CD8-positive, alpha-beta T cell (primary cell): ENCODE measurements at regions of chr3 and their contacts with region 1.

Region 1: DNA sequence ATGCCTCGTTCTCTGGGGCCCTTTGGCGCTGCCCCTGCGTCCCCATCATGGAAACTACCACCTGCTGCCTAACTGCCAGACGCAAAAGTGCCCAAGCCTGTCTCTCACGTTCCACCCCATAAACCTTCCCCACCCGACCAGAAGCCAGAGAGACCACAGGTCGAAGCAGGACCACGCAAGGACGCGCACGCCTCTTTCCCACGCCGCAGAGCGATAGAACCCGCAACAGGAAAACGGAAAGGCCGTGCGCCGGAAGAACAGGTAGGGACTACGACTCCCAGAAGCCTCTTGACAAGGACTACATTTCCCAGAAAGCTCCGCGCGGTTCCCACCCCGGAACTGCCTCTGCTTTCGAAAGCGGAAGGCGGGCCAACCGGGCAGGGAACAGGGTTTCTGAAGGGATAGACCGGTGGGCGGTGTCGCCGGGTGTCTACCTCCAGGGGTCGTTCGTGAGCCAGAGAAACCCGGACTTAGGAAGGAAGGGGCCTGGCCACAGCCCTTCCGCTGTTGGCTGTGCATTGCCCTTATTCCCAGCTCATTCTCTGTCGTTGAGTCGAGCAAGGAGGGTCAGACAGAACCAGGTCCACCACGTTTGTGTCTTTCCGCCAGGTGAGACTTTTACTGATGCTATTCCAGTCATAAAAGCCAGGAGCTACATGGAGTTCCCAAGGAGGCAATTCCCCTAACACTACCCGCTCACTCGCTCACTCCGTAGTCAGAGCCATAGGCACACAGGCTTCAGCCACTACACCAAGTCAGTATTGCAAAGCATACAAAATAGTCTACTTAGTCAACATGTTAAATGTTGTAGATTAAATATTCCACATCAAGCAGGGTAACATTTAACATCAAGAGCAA is 56.6 kb upstream of the ZBTB38 start:
- DNase-seq: peak; percentile 93 to 98 (median 98)
- ATAC-seq: peak; percentile 93
- H3K4me3 ChIP-seq: peak overlapping the region; percentile 82 to 87
- H3K4me3 Mint-ChIP-seq: peak overlapping the region; percentile 93
- H3K27ac ChIP-seq: peak overlapping the region; percentile 61 to 84
- H3K27ac Mint-ChIP-seq: peak overlapping the region; percentile 96
- H3K4me1 ChIP-seq: peaks cover 43% of the 10 kb centered on the region
- H3K4me1 Mint-ChIP-seq: peaks cover 53% of the 10 kb centered on the region
- H3K27me3 ChIP-seq: no peaks in the 10 kb centered on the region
- H3K27me3 Mint-ChIP-seq: no peaks in the 10 kb centered on the region
- CTCF ChIP-seq: peak; percentile 60

Region 2: GRCh38 chr3:141104151-141104821 is 207.4 kb before region 1 on chr3:
- CTCF ChIA-PET with region 1: no interaction called
- POLR2A ChIA-PET with region 1: no interaction called
- intact Hi-C with region 1: no loop called
- DNase-seq: no peak
- ATAC-seq: no peak
- H3K4me3 ChIP-seq: no peak overlapping the region
- H3K4me3 Mint-ChIP-seq: no peak overlapping the region
- H3K27ac ChIP-seq: no peak overlapping the region
- H3K27ac Mint-ChIP-seq: no peak overlapping the region
- H3K4me1 ChIP-seq: no peaks in the 10 kb centered on the region
- H3K4me1 Mint-ChIP-seq: no peaks in the 10 kb centered on the region
- H3K27me3 ChIP-seq: no peaks in the 10 kb centered on the region
- H3K27me3 Mint-ChIP-seq: no peaks in the 10 kb centered on the region
- CTCF ChIP-seq: no peak

Region 3: DNA sequence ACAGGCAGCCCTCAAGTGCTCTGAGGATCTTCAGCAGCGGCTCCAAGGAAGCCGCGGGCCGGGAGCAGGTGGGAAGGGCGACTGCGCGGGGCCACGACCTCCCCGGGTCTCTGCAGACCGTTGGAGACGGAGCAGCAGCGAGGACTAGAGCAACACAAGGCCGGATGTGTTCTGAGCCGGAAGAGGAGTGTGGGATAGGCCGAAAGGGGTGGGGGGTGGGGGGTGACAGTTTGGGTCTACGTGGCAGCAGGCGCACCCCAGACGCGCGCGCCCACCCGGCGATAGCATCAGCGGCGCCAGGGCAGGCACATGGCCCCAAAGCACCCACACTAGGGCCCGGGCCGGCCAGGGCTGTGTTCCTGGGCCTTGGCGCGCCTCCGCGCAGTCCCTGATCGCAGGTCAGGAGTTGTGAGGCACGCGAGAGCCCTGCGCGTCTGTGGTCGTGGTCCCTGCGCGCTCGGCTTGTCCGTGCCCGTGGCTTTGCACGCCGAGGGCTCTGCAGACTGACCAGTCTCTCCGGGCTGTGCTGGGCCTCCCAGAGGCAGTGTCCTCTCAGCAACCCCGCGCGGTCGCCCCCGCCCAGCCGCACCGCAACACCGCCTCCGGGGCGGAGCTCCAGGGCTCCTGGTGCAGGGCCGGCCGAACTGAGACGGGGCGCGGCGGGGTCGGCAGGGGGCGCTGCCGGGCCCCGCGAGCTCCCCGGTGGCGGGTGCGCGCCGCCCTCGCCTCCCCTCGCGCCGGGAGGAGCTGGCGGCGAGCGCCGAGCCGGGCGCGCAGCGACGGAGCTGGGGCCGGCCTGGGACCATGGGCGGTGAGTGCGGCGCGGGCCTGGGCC is 80.4 kb before region 1 on chr3 and contains the start of gene PXYLP1:
- CTCF ChIA-PET with region 1: interaction called, 16 read pairs
- POLR2A ChIA-PET with region 1: interaction called, 14 read pairs
- intact Hi-C with region 1: loop called in 1 of 2 experiments (anchors 1 kb)
- DNase-seq: peak; percentile 78 to 95 (median 89)
- ATAC-seq: peak; percentile 90
- H3K4me3 ChIP-seq: peak within 1 kb of the TSS; percentile 89 to 94
- H3K4me3 Mint-ChIP-seq: peak within 1 kb of the TSS; percentile 91
- H3K27ac ChIP-seq: peak within 1 kb of the TSS; percentile 87 to 94
- H3K27ac Mint-ChIP-seq: peak within 1 kb of the TSS; percentile 98
- H3K4me1 ChIP-seq: peaks cover 42% of the 10 kb centered on the region
- H3K4me1 Mint-ChIP-seq: peaks cover 51% of the 10 kb centered on the region
- H3K27me3 ChIP-seq: no peaks in the 10 kb centered on the region
- H3K27me3 Mint-ChIP-seq: no peaks in the 10 kb centered on the region
- CTCF ChIP-seq: peak; percentile 66
- total RNA-seq, gene PXYLP1: 14.5 to 21.8 TPM

Region 4: DNA sequence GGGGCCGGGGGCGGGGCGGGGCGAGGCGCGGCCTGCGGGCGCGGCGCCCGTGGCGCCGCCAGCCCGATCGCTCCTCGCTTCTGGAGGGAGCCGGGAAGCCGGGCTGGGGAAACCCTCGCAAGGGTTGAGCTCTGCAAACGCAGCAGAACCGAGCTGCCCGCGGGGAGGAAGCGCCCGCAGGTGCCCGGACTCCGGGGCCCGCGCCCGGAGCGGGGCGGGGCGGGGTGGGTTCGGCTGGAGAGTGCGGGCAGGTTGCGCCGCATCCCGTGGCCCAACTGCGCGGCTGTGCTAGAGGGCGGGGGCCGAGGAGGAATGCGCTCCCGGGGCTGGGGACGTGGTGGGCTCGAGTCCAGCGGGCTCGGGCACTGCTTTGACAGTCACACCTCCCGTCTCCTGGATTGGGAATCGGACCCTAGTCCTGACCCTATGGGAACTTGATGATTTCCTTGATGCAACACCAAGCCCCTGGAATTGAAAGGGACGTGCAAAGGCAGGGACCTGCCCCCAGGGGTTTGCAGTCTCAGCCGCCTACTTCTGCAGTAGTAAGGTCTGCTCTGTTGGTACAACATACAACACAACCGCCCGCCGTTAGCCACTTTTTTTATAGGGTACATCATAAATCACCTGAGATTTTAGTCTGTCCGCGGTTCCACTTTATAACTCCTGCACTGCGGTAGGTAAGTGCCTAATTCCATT is 90.9 kb after region 1 on chr3:
- CTCF ChIA-PET with region 1: interaction called, 6 read pairs
- POLR2A ChIA-PET with region 1: interaction called, 4 read pairs
- intact Hi-C with region 1: loop called in 1 of 2 experiments (anchors 2 kb)
- DNase-seq: peak; percentile 15 to 80 (median 56)
- ATAC-seq: peak; percentile 67
- H3K4me3 ChIP-seq: peak overlapping the region; percentile 70 to 85
- H3K4me3 Mint-ChIP-seq: peak overlapping the region; percentile 96
- H3K27ac ChIP-seq: peak overlapping the region; percentile 81 to 88
- H3K27ac Mint-ChIP-seq: peak overlapping the region; percentile 97
- H3K4me1 ChIP-seq: peaks cover 25% of the 10 kb centered on the region
- H3K4me1 Mint-ChIP-seq: peaks cover 70% of the 10 kb centered on the region
- H3K27me3 ChIP-seq: no peaks in the 10 kb centered on the region
- H3K27me3 Mint-ChIP-seq: no peaks in the 10 kb centered on the region
- CTCF ChIP-seq: no peak

Region 5: GRCh38 chr3:141452036-141452435 is 140.3 kb after region 1 on chr3:
- CTCF ChIA-PET with region 1: interaction called, 242 read pairs
- POLR2A ChIA-PET with region 1: interaction called, 13 read pairs
- intact Hi-C with region 1: loop called (anchors 1 to 2 kb)
- DNase-seq: peak in 5 of 9 experiments; percentile 28 to 77 (median 55)
- ATAC-seq: peak; percentile 88
- H3K4me3 ChIP-seq: no peak overlapping the region
- H3K4me3 Mint-ChIP-seq: no peak overlapping the region
- H3K27ac ChIP-seq: peak overlapping the region in 1 of 2 experiments; percentile 51
- H3K27ac Mint-ChIP-seq: no peak overlapping the region
- H3K4me1 ChIP-seq: peaks cover 15% of the 10 kb centered on the region
- H3K4me1 Mint-ChIP-seq: peaks cover 7% of the 10 kb centered on the region
- H3K27me3 ChIP-seq: no peaks in the 10 kb centered on the region
- H3K27me3 Mint-ChIP-seq: peaks cover 2% of the 10 kb centered on the region
- CTCF ChIP-seq: peak; percentile 55

Region 6: GRCh38 chr3:141561426-141562034 is 249.8 kb after region 1 on chr3:
- CTCF ChIA-PET with region 1: interaction called, 12 read pairs
- POLR2A ChIA-PET with region 1: interaction called, 6 read pairs
- intact Hi-C with region 1: loop called (anchors 5 kb)
- DNase-seq: peak in 6 of 9 experiments; percentile 28 to 83 (median 46)
- ATAC-seq: peak; percentile 78
- H3K4me3 ChIP-seq: no peak overlapping the region
- H3K4me3 Mint-ChIP-seq: no peak overlapping the region
- H3K27ac ChIP-seq: no peak overlapping the region
- H3K27ac Mint-ChIP-seq: peak overlapping the region; percentile 66
- H3K4me1 ChIP-seq: peaks cover 46% of the 10 kb centered on the region
- H3K4me1 Mint-ChIP-seq: peaks cover 38% of the 10 kb centered on the region
- H3K27me3 ChIP-seq: no peaks in the 10 kb centered on the region
- H3K27me3 Mint-ChIP-seq: no peaks in the 10 kb centered on the region
- CTCF ChIP-seq: peak; percentile 100

Region 7: GRCh38 chr3:142447852-142448823 is 1136.4 kb after region 1 on chr3 and contains the start of gene XRN1:
- CTCF ChIA-PET with region 1: no interaction called
- POLR2A ChIA-PET with region 1: no interaction called
- intact Hi-C with region 1: loop called (anchors 5 kb)
- DNase-seq: peak; percentile 92 to 96 (median 95)
- ATAC-seq: peak; percentile 95
- H3K4me3 ChIP-seq: peak within 1 kb of the TSS; percentile 86 to 93
- H3K4me3 Mint-ChIP-seq: peak within 1 kb of the TSS; percentile 99
- H3K27ac ChIP-seq: peak within 1 kb of the TSS; percentile 97 to 99
- H3K27ac Mint-ChIP-seq: peak within 1 kb of the TSS; percentile 100
- H3K4me1 ChIP-seq: peaks cover 40% of the 10 kb centered on the region
- H3K4me1 Mint-ChIP-seq: peaks cover 43% of the 10 kb centered on the region
- H3K27me3 ChIP-seq: no peaks in the 10 kb centered on the region
- H3K27me3 Mint-ChIP-seq: no peaks in the 10 kb centered on the region
- CTCF ChIP-seq: no peak
- total RNA-seq, gene XRN1: 91.0 to 105 TPM